PC-3 (cell line): ENCODE measurements at regions of chr1 and their contacts with region 1.

Region 1: DNA sequence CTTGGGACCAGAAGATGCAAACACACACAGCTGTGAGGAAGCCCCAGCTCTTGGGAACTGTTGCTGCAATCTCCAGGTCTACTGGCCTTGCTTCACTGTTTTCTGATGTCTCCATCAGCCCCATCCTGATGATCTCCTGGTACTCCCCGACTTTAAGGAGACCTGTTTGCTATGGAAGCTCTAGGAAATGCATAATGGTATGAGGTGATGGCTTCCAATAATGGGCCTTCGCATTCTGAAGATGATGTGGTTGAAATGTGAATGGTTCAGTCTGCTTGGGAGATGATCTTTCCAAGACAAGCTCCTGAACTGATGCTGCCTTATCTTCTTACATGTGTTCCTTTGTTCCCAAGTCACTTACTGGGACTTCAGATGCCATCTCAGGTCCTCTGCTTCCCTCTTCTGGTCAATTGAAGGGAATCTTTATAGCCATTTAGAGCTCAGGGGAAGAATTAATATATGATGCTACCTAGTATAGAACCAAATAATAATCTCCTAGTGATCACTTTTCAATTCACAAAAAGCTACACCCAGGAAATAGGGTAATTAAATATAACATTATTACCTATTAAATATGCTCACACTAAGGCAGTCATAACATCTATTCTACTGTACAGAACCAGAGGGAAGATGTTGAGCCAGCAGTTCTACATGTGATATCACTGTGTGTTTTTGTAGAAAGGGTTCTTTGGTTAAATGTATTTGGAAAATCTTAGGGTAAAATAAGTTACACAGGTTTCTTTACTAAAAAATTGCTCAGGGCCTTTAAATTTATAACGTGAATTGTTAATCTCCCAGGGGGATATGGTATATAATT is 73.9 kb upstream of the VTCN1 start:
- DNase-seq: peak; percentile 83
- ATAC-seq: peak; percentile 83
- H3K4me3 ChIP-seq: no peak overlapping the region
- H3K27ac ChIP-seq: no peak overlapping the region
- H3K4me1 ChIP-seq: peaks cover 8% of the 10 kb centered on the region
- H3K27me3 ChIP-seq: no peaks in the 10 kb centered on the region
- CTCF ChIP-seq: peak; percentile 92

Region 2: GRCh38 chr1:117067533-117068370 is 216.9 kb before region 1 on chr1:
- CTCF ChIA-PET with region 1: interaction called, 21 read pairs
- POLR2A ChIA-PET with region 1: no interaction called
- intact Hi-C with region 1: loop called (anchors 1 kb)
- DNase-seq: peak; percentile 65
- ATAC-seq: peak; percentile 95
- H3K4me3 ChIP-seq: no peak overlapping the region
- H3K27ac ChIP-seq: no peak overlapping the region
- H3K4me1 ChIP-seq: no peaks in the 10 kb centered on the region
- H3K27me3 ChIP-seq: no peaks in the 10 kb centered on the region
- CTCF ChIP-seq: peak; percentile 89

Region 3: DNA sequence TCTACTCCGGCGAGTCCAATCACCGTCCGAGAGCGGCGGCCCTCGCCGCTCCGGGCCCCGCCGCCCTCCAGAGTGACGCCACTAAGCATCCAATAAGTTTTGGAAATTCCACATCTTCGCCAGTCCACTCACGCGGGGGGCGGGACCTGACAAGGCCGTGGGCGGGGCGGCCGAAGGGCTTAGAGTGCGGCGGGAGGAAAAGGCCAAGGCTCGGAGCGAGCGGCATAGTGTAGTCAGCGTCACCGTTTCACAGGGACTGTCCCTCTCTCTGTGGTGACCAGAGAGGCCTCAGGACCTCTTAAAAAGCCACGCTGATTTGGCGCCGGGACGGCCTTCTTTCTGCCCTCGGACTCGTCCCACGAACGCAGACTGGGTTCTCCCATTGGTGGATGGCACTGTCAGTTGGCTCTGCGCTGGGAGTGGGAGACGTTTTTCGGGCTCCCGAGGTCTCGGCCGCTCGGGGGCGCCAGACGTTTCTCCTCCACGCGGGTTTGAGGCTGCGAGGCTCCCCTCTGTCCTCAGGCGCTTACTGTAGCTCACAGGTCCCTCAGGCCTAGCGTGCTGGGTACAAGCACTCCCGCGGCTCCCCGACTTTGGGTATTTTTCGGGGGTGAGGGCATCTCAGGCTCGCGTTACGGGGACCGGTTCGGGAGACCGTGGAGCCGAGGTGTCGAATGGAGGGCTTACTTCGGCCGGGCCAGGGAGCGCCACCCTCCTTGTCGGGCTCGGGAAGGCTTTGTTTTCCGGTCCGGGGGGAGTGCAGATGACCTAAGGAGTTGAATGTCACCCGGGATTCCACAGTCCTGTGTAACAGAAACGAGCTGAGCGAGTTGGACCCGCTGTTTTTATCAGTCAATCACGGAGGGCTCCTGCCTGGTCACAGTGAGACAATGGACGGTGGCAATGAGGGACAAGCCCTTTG is 162.6 kb before region 1 on chr1:
- CTCF ChIA-PET with region 1: interaction called, 13 read pairs
- POLR2A ChIA-PET with region 1: no interaction called
- intact Hi-C with region 1: loop called (anchors 1 kb)
- DNase-seq: peak; percentile 97
- ATAC-seq: peak; percentile 97
- H3K4me3 ChIP-seq: peak overlapping the region; percentile 71
- H3K27ac ChIP-seq: peak overlapping the region; percentile 58
- H3K4me1 ChIP-seq: peaks cover 15% of the 10 kb centered on the region
- H3K27me3 ChIP-seq: no peaks in the 10 kb centered on the region
- CTCF ChIP-seq: peak; percentile 89

Region 4: DNA sequence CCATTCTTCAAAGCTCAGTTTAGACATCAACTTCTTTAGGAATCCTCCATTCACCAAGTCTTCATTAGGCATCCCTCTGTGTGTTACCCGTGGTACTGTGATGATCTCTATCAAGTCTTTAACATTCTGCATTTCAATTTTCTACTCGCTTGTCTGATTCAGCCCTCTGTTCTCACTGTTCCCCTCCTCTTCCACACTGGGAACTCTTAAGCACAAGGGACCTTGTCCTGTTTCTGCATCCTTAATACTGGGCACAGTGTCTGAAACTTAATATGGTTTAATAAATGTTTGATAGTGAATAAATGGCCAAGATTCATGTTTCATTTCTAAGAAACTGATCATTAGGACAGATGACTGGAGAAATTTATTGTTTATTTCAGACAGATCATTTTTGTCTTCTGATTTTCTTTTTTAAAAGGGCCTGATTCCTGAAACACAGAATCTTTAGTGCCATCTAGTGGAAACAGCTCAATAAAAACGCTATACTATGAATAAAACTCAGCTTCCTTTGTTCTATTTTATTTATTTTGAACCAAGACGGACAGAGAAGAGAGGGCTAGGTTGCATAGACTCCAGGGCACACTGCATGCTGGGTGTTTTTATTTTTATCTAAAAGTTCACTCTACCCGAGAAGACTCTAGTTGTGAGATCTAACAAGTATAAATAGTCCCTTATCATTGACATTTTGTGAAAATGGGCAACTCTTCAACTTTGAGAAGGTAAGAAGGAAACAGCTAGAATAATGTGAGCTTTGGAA is 156.1 kb before region 1 on chr1:
- CTCF ChIA-PET with region 1: interaction called, 37 read pairs
- POLR2A ChIA-PET with region 1: no interaction called
- intact Hi-C with region 1: loop called (anchors 1 kb)
- DNase-seq: peak; percentile 72
- ATAC-seq: peak; percentile 67
- H3K4me3 ChIP-seq: 0 out of 2 replicates have a peak overlapping the region, but pooled peaks have one; percentile 14
- H3K27ac ChIP-seq: no peak overlapping the region
- H3K4me1 ChIP-seq: peaks cover 10% of the 10 kb centered on the region; the same call in 1 of the 2 replicates
- H3K27me3 ChIP-seq: no peaks in the 10 kb centered on the region
- CTCF ChIP-seq: peak; percentile 78

Region 5: GRCh38 chr1:117146570-117147346 is 137.8 kb before region 1 on chr1:
- CTCF ChIA-PET with region 1: no interaction called
- POLR2A ChIA-PET with region 1: no interaction called
- intact Hi-C with region 1: loop called (anchors 5 kb)
- DNase-seq: peak; percentile 94
- ATAC-seq: peak; percentile 77
- H3K4me3 ChIP-seq: no peak overlapping the region; the same call in 1 of the 2 replicates
- H3K27ac ChIP-seq: peak overlapping the region; percentile 98
- H3K4me1 ChIP-seq: peaks cover 41% of the 10 kb centered on the region
- H3K27me3 ChIP-seq: no peaks in the 10 kb centered on the region
- CTCF ChIP-seq: no peak

Region 6: GRCh38 chr1:117166076-117166475 is 118.5 kb before region 1 on chr1:
- CTCF ChIA-PET with region 1: no interaction called
- POLR2A ChIA-PET with region 1: no interaction called
- intact Hi-C with region 1: loop called (anchors 5 kb)
- DNase-seq: peak; percentile 93
- ATAC-seq: peak; percentile 85
- H3K4me3 ChIP-seq: no peak overlapping the region
- H3K27ac ChIP-seq: peak overlapping the region; percentile 61
- H3K4me1 ChIP-seq: peaks cover 58% of the 10 kb centered on the region
- H3K27me3 ChIP-seq: no peaks in the 10 kb centered on the region
- CTCF ChIP-seq: no peak

Region 7: GRCh38 chr1:117225967-117226366 is 58.6 kb before region 1 on chr1:
- CTCF ChIA-PET with region 1: no interaction called
- POLR2A ChIA-PET with region 1: no interaction called
- intact Hi-C with region 1: loop called (anchors 5 kb)
- DNase-seq: peak; percentile 66
- ATAC-seq: peak; percentile 91
- H3K4me3 ChIP-seq: peak overlapping the region; percentile 31; the same call in 1 of the 2 replicates
- H3K27ac ChIP-seq: peak overlapping the region; percentile 87
- H3K4me1 ChIP-seq: peaks cover 19% of the 10 kb centered on the region
- H3K27me3 ChIP-seq: no peaks in the 10 kb centered on the region
- CTCF ChIP-seq: no peak

Region 8: DNA sequence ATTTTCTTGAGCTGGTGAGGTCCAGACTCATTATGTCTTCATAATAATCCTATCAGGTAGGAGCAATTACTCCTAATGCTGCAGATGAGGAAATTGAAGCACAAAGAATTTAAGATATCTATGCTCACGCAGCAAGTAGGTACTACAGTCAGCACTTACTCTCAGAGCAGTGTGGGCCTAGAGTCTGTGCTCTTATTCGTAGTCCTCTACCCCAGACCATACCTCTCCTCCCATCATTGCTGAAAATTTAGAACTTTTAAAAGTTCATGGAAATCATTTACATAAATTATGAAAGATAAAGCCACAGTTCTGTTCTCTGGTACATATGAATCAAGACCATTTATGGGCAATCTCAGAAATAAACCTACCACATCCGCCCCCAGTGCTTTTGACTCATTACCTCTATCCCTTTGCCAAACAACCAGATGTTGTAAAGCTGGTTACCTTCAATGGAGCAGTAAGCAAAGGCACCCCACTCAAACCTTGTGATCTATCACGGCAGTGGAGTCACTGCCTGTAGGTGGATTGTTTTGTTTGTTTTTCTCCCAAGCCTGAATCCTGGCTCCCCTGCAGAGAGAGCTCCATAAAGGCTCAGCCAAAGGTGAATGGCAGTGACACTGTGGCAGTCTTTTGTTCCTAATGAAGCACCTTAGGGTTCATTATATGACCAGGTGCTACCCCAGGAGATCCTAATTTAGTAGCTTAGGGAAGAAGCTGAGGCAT is 61.8 kb after region 1 on chr1:
- CTCF ChIA-PET with region 1: no interaction called
- POLR2A ChIA-PET with region 1: no interaction called
- intact Hi-C with region 1: no loop called
- DNase-seq: peak; percentile 85
- ATAC-seq: peak; percentile 90
- H3K4me3 ChIP-seq: no peak overlapping the region
- H3K27ac ChIP-seq: peak overlapping the region; percentile 43
- H3K4me1 ChIP-seq: peaks cover 15% of the 10 kb centered on the region
- H3K27me3 ChIP-seq: no peaks in the 10 kb centered on the region
- CTCF ChIP-seq: no peak

Region 9: DNA sequence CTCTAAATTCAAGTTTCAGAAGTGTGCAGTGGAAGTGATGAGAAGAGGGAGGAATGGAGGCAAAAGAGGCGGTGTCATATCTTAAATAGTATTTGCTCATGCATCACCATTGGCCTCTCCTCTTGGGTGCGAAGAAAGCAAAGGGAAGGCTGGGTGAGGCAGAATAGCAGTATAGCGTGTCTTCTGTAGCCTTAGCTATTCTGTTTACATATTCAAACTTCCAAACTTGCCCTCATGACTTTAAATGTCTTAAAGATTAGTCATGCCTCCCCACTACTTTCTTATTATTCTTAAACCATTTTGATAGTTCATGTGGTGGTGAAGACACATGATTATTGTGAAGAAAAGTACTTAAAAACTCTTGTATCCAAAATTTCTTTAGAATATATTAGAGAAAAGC is 216.7 kb after region 1 on chr1:
- CTCF ChIA-PET with region 1: no interaction called
- POLR2A ChIA-PET with region 1: no interaction called
- intact Hi-C with region 1: no loop called
- DNase-seq: peak; percentile 41
- ATAC-seq: peak; percentile 67
- H3K4me3 ChIP-seq: no peak overlapping the region
- H3K27ac ChIP-seq: no peak overlapping the region
- H3K4me1 ChIP-seq: peaks cover 9% of the 10 kb centered on the region; the same call in 1 of the 2 replicates
- H3K27me3 ChIP-seq: no peaks in the 10 kb centered on the region
- CTCF ChIP-seq: no peak